Activated T-helper 1 cell treated with anti-CD3 and anti-CD28 coated beads, Interleukin-12 subunit alpha, Interleukin-12 subunit beta, Interleukin-2, Interleukin-4 antibody, amounts not matched to agents 30 ng/mL and 10 ng/mL and 1 ng/mL, durations not matched to agents 14 hours and 24 hours and 36 hours (primary cell): ENCODE measurements at regions of chr11 and their contacts with region 1.

Region 1: GRCh38 chr11:5808500-5809121 is at the start of gene OR52N2:
- DNase-seq: peak; percentile 56
- H3K4me3 Mint-ChIP-seq: peak within 1 kb of the TSS; percentile 85
- H3K27ac Mint-ChIP-seq: no peak within 1 kb of the TSS
- H3K4me1 Mint-ChIP-seq: peaks cover 15% of the 10 kb centered on the region
- H3K27me3 Mint-ChIP-seq: peaks cover 20% of the 10 kb centered on the region
- total RNA-seq, gene OR52N2: not detected in 2 replicates

Region 2: DNA sequence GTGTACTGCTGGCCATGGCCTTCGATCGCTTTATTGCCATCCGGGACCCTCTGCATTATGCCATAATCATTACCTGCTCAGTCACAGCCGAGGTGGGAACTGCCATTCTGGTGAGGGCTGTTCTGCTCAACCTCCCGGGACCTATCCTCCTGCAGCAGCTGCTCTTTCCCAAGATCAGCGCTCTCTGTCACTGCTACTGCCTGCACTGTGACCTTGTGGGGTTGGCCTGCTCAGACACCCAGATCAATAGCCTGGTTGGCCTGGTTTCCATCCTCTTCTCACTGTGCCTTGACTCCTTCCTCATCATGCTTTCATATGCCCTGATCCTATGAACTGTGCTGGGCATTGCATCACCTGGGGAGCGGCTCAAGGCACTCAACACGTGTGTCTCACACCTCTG is 1390.2 kb before region 1 on chr11:
- intact Hi-C with region 1: no loop called
- DNase-seq: no peak
- H3K4me3 Mint-ChIP-seq: no peak overlapping the region
- H3K27ac Mint-ChIP-seq: no peak overlapping the region
- H3K4me1 Mint-ChIP-seq: no peaks in the 10 kb centered on the region
- H3K27me3 Mint-ChIP-seq: no peaks in the 10 kb centered on the region

Region 3: DNA sequence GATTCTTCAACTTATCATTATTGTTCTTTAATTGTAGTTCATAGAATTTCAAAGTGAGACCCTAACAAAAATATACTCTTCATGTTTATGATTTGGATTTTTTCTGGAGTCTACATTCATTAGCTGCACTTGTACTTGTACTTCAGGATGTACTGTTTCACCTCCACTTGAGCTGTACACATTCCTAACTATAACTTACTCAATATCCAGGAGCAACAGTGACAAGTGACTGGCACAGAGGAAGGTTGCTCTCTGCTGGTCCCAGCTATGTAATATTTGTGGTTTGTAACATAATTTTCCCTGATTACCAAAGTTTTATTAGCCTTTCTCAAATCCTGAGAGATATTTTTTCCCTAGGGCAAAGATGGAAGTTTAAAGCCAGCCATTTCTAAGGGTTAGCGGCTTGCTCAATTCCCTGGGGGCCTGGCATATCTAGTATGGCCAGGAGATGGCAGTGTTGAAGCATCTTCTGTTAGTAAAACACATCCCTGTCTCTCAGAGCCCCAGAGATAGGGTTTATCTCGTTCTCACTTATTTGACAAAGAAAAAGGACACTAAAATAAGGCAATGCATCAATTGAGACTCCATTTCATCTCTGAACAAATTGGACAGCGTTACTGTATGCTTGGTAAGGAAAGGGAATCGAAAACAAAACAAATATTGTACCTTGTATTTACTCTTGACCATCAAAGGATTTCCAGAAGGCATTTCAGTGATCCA is 684.6 kb before region 1 on chr11:
- intact Hi-C with region 1: loop called (anchors 1 kb)
- DNase-seq: peak; percentile 6
- H3K4me3 Mint-ChIP-seq: no peak overlapping the region
- H3K27ac Mint-ChIP-seq: no peak overlapping the region
- H3K4me1 Mint-ChIP-seq: no peaks in the 10 kb centered on the region
- H3K27me3 Mint-ChIP-seq: peaks cover 2% of the 10 kb centered on the region

Region 4: GRCh38 chr11:5364214-5364613 is 444.4 kb before region 1 on chr11:
- intact Hi-C with region 1: no loop called
- DNase-seq: no peak
- H3K4me3 Mint-ChIP-seq: no peak overlapping the region
- H3K27ac Mint-ChIP-seq: no peak overlapping the region
- H3K4me1 Mint-ChIP-seq: no peaks in the 10 kb centered on the region
- H3K27me3 Mint-ChIP-seq: peaks cover 4% of the 10 kb centered on the region

Region 5: DNA sequence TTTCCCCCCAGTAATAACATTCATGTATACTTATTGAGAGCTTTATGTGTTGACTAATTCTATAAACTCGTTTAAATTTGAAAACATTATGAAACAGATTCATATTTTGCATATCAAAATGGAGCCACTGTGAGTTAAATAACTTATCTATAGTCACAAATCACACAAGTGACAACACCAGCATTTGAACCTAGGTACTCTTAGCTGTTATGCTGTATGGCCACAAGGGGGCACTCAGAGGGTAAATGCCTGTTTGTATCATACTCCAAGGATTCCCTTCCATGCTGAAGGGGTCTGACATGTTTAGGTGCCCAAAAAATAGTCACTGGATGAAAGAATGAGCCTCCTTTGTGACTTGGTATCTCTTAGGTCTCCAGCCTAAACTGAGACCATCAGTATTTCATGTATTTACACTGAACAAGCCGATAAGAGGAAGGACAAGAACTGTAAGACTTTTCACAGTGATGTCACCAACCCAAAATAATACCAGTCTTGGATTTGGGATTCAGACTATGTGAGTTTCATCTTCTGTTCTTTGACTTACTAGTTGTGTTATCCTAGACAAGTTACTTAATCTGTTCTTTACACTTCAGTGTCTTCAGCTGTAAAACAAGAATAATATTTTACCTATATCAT is 332.3 kb before region 1 on chr11:
- intact Hi-C with region 1: loop called (anchors 1 kb)
- DNase-seq: peak; percentile 4
- H3K4me3 Mint-ChIP-seq: no peak overlapping the region
- H3K27ac Mint-ChIP-seq: no peak overlapping the region
- H3K4me1 Mint-ChIP-seq: no peaks in the 10 kb centered on the region
- H3K27me3 Mint-ChIP-seq: peaks cover 6% of the 10 kb centered on the region

Region 6: GRCh38 chr11:5684646-5685362 is 123.8 kb before region 1 on chr11 and contains the start of gene TRIM5:
- intact Hi-C with region 1: loop called (anchors 1 kb)
- DNase-seq: peak; percentile 74
- H3K4me3 Mint-ChIP-seq: peak within 1 kb of the TSS; percentile 89
- H3K27ac Mint-ChIP-seq: peak within 1 kb of the TSS; percentile 96
- H3K4me1 Mint-ChIP-seq: peaks cover 57% of the 10 kb centered on the region
- H3K27me3 Mint-ChIP-seq: no peaks in the 10 kb centered on the region
- total RNA-seq, gene TRIM5: 7.9 and 8.6 TPM in 2 replicates